ENCODE measurements at regions of chr2 and their contacts with region 1.

Region 1: GRCh38 chr2:1675633-1676032 is 68.7 kb downstream of the PXDN start:
- DNase-seq: peak; percentile 99
- ATAC-seq: peak; percentile 99
- H3K4me3 ChIP-seq: no peak overlapping the region
- H3K27ac ChIP-seq: peak overlapping the region; percentile 60
- H3K4me1 ChIP-seq: peaks cover 9% of the 10 kb centered on the region
- H3K27me3 ChIP-seq: no peaks in the 10 kb centered on the region
- CTCF ChIP-seq: peak; percentile 91
- POLR2A ChIP-seq: peak; percentile 78
- RAD21 ChIP-seq: peak; percentile 85

Region 2: DNA sequence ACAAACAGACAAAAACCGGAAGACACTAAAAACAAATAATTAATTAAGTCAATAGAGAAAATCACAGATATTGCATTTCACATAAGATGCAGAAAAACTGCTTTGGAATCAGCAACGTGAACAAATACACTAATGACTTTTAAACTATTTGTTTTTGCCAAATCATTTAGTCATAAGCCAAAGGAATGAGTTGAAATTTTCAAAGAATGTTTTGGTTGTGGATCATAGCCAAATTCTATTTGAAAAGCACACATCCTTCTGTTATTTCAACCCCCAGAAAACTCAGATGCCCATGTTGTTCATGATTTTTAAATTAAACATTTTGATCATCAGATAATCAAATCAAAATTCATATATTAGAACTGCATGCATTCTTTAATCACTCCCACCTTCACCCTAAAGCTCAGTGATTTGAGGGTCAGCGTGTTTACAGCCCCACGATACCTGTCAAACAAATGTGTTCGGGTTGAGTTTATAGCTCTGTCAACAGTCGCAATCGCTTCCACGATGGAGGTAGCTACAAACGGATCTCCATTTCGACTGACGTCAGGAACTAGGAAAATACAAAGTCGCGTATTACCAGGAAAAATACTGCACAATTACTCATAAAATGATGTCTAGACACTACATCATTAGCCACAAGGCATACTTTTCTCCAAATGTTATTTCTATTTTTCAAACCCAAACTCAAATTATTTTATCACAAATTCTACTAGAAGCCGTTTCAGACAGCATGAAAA is 21.5 kb before region 1 on chr2:
- CTCF ChIA-PET with region 1: no interaction called
- POLR2A ChIA-PET with region 1: no interaction called
- dilution Hi-C with region 1: no loop called
- in situ Hi-C with region 1: no loop called
- intact Hi-C with region 1: loop called (anchors 1 kb)
- DNase-seq: peak; percentile 87
- ATAC-seq: no peak
- H3K4me3 ChIP-seq: no peak overlapping the region
- H3K27ac ChIP-seq: peak overlapping the region; percentile 91
- H3K4me1 ChIP-seq: peaks cover 34% of the 10 kb centered on the region
- H3K27me3 ChIP-seq: no peaks in the 10 kb centered on the region
- CTCF ChIP-seq: no peak
- POLR2A ChIP-seq: 0 out of 2 replicates have a peak, but pooled peaks have one; percentile 8
- RAD21 ChIP-seq: no peak

Region 3: GRCh38 chr2:1730015-1730927 is 54.6 kb after region 1 on chr2:
- CTCF ChIA-PET with region 1: interaction called, 5 read pairs
- POLR2A ChIA-PET with region 1: no interaction called
- dilution Hi-C with region 1: no loop called
- in situ Hi-C with region 1: no loop called
- intact Hi-C with region 1: loop called (anchors 1 kb)
- DNase-seq: peak; percentile 89
- ATAC-seq: peak; percentile 70
- H3K4me3 ChIP-seq: no peak overlapping the region
- H3K27ac ChIP-seq: peak overlapping the region; percentile 99
- H3K4me1 ChIP-seq: peaks cover 34% of the 10 kb centered on the region
- H3K27me3 ChIP-seq: no peaks in the 10 kb centered on the region
- CTCF ChIP-seq: no peak
- POLR2A ChIP-seq: peak; percentile 38; the same call in 1 of the 2 replicates
- RAD21 ChIP-seq: no peak

Region 4: GRCh38 chr2:1736997-1737480 is 61.4 kb after region 1 on chr2:
- CTCF ChIA-PET with region 1: interaction called, 10 read pairs
- POLR2A ChIA-PET with region 1: no interaction called
- dilution Hi-C with region 1: no loop called
- in situ Hi-C with region 1: no loop called
- intact Hi-C with region 1: no loop called
- DNase-seq: peak; percentile 95
- ATAC-seq: peak; percentile 79
- H3K4me3 ChIP-seq: peak overlapping the region; percentile 23; the same call in 1 of the 2 replicates
- H3K27ac ChIP-seq: peak overlapping the region; percentile 71
- H3K4me1 ChIP-seq: peaks cover 46% of the 10 kb centered on the region
- H3K27me3 ChIP-seq: no peaks in the 10 kb centered on the region
- CTCF ChIP-seq: no peak
- POLR2A ChIP-seq: peak; percentile 88
- RAD21 ChIP-seq: no peak

Region 5: GRCh38 chr2:1742681-1743395 is 67.2 kb after region 1 on chr2:
- CTCF ChIA-PET with region 1: interaction called, 10 read pairs
- POLR2A ChIA-PET with region 1: no interaction called
- dilution Hi-C with region 1: no loop called
- in situ Hi-C with region 1: loop called (anchors 5 kb)
- intact Hi-C with region 1: loop called (anchors 1 kb)
- DNase-seq: peak; percentile 90
- ATAC-seq: peak; percentile 55
- H3K4me3 ChIP-seq: peak overlapping the region; percentile 52
- H3K27ac ChIP-seq: peak overlapping the region; percentile 80
- H3K4me1 ChIP-seq: peaks cover 37% of the 10 kb centered on the region
- H3K27me3 ChIP-seq: no peaks in the 10 kb centered on the region
- CTCF ChIP-seq: peak; percentile 68
- POLR2A ChIP-seq: peak; percentile 55; the same call in 1 of the 2 replicates
- RAD21 ChIP-seq: peak; percentile 76

Region 6: DNA sequence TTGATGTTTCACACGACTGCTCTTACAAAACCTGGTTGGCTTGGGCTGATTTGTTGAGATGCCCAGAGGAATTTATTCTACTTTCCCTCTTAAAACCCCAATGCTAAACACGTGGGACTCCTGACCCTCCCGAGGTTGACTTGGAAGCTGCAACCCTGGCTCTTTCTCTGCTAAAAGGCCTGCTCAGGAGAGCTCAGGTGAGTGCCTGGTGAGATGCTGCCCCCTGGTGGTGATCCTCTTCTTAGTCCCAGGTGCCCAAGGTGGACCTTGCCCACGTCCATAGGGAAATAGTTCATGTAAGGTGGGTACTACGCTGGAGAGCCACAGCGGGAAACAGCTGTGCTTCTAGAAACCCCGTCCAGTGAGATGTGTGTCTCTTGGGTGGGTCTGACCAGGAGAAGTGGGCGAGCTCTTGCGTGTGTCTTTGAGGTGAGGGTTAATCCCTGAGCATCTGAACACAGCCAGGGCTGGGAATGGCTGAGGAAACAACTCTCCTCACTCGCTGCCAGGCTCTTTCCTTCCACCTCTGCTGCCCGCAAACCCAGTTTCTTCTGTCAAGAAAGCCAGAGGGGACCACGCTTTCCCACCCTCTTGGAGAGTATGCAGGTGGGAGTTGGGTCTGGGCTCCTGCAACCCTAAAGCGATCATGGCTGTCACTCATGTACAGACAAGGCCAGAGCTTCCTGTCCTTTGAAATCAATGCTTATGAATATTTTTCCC is 94.2 kb after region 1 on chr2:
- CTCF ChIA-PET with region 1: interaction called, 8 read pairs
- POLR2A ChIA-PET with region 1: no interaction called
- dilution Hi-C with region 1: no loop called
- in situ Hi-C with region 1: no loop called
- intact Hi-C with region 1: loop called (anchors 1 kb)
- DNase-seq: peak; percentile 62
- ATAC-seq: peak; percentile 60; the same call in 1 of the 2 replicates
- H3K4me3 ChIP-seq: no peak overlapping the region
- H3K27ac ChIP-seq: no peak overlapping the region
- H3K4me1 ChIP-seq: no peaks in the 10 kb centered on the region
- H3K27me3 ChIP-seq: peaks cover 3% of the 10 kb centered on the region; the same call in 1 of the 2 replicates
- CTCF ChIP-seq: peak; percentile 76
- POLR2A ChIP-seq: no peak
- RAD21 ChIP-seq: peak; percentile 92

Region 7: DNA sequence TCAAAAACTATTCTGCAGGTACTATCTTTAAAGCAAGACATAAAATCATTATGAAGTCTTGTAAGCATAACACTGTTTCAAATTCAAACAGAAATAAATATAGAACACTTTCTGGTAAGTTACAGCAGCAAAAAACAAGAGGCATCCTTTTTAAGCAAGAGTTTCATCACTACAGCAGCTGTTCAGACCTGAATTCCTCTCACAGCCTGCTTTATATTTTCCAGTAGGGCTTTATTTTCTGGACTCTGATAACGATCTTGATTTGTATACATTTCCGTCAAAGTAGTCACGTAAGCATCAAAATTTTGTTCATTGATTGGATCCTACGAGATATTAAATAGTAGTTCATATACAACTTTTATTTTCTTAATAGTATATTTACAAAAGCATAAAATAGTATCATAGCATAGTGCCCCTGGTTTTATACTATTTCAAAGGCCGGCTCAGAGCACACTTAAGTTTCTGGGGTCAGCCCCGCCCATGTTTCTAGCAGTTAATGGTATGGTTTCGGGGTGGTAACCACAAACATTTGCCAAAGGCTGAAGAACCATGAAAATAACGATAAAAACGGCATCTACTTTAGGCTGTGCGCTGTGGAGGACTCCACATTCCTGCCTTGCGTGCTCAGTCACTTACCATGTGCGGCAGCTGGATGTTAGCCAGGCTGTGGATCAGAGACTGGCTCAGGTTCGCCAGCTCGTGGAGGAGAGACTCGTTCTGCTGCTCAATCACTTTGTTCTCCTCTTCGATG is 116.2 kb after region 1 on chr2:
- CTCF ChIA-PET with region 1: no interaction called
- POLR2A ChIA-PET with region 1: no interaction called
- dilution Hi-C with region 1: no loop called
- in situ Hi-C with region 1: no loop called
- intact Hi-C with region 1: loop called (anchors 1 kb)
- DNase-seq: peak; percentile 89
- ATAC-seq: peak; percentile 83
- H3K4me3 ChIP-seq: no peak overlapping the region
- H3K27ac ChIP-seq: peak overlapping the region; percentile 61; the same call in 1 of the 2 replicates
- H3K4me1 ChIP-seq: peaks cover 7% of the 10 kb centered on the region
- H3K27me3 ChIP-seq: no peaks in the 10 kb centered on the region
- CTCF ChIP-seq: 0 out of 2 replicates have a peak, but pooled peaks have one; percentile 3
- POLR2A ChIP-seq: no peak
- RAD21 ChIP-seq: no peak

Region 8: DNA sequence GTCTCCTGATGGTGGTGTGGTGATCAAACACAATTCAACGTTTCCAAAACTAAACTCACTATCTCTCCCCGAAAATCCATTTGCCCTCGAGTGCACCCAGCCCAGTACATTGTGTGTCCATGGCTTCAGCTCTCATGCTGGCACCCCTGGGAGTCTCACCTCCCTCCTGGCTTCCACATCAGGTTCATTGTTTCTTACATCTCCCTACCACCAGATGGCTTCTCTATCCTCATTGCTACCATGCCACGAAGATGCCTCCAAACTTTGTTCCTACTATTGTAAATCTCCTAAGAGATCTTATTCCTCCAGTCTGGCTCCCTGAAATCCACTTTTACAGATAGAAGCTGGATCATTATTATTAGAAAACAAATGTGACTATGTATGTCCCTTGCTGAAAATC is 458.4 kb after region 1 on chr2:
- CTCF ChIA-PET with region 1: no interaction called
- POLR2A ChIA-PET with region 1: no interaction called
- dilution Hi-C with region 1: no loop called
- in situ Hi-C with region 1: no loop called
- intact Hi-C with region 1: no loop called
- DNase-seq: no peak
- ATAC-seq: no peak
- H3K4me3 ChIP-seq: no peak overlapping the region
- H3K27ac ChIP-seq: no peak overlapping the region
- H3K4me1 ChIP-seq: no peaks in the 10 kb centered on the region
- H3K27me3 ChIP-seq: no peaks in the 10 kb centered on the region
- CTCF ChIP-seq: no peak
- POLR2A ChIP-seq: no peak
- RAD21 ChIP-seq: no peak